ENCODE measurements at regions of chr2 and their contacts with region 1.

Region 1: DNA sequence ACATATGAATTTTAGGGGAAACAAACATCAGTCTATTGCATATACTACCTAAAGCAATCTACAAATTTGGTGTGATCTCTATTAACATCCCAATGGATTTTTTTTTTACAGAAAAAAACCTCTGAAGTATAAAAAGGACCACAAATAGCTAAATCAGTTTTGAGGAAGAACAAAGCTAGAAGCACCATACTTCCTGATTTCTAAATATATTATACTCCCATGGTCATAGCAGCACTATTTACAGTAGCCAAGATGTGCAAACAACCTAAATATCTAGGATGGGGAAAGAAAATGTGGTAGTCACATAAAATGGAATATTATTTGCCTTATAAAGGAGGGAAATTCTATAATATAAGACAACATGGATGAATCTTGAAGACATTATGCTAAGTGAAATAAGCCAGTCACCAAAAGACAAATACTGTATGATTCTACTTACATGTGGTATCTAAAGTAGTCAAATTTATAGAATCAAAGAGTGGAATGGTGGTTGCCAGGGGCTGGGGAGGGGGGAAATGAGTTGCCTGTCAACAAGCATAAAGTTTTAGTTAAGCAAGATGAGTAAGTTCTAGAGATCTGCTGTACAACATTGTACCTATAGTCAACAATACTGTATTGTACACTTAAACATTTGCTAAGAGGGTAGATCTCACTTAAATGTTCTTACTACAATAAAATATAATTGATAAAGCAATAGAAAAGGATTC is 17.6 kb upstream of the CASP8 start:
- DNase-seq: no peak
- H3K4me3 ChIP-seq: no peak overlapping the region
- H3K27ac ChIP-seq: no peak overlapping the region
- H3K4me1 ChIP-seq: no peaks in the 10 kb centered on the region
- H3K27me3 ChIP-seq: no peaks in the 10 kb centered on the region
- CTCF ChIP-seq: no peak

Region 2: DNA sequence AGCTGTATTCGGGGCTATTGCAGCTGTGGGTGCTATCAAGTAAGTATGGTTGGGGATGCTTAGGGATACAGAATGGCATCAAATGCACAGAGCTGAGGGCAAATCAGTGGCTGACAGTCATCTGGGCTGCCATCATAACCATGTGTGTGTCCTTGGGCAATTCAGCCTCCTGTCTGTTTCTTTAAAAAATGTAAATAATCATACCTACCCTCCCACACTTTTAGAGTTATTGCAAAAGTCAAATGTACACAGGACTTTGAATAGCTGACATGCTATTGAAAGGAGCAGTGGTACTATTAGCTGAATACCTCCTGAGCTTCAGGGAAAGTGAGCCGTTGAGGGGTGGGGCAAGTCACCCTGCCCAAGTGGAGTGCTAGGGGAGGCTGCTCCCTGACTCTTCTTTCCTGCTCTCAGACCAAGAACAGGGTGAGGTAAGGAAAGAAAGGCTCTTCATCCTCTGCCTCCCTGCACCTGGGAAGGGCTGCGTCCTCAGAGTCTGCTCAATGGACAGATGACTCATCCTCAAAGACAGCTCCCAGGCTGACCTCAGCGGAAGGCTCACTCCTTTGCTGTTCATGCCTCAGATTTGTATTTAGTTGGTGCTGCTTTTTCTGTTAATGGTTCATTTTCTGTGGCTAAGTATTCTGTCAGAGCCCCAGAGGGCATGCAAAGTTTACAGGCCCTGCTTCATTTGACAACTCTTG is 486.0 kb before region 1 on chr2:
- CTCF ChIA-PET with region 1: no interaction called
- dilution Hi-C with region 1: no loop called
- in situ Hi-C with region 1: no loop called
- intact Hi-C with region 1: no loop called
- DNase-seq: peak; percentile 93
- H3K4me3 ChIP-seq: no peak overlapping the region
- H3K27ac ChIP-seq: peak overlapping the region; percentile 58
- H3K4me1 ChIP-seq: peaks cover 53% of the 10 kb centered on the region
- H3K27me3 ChIP-seq: no peaks in the 10 kb centered on the region
- CTCF ChIP-seq: no peak

Region 3: DNA sequence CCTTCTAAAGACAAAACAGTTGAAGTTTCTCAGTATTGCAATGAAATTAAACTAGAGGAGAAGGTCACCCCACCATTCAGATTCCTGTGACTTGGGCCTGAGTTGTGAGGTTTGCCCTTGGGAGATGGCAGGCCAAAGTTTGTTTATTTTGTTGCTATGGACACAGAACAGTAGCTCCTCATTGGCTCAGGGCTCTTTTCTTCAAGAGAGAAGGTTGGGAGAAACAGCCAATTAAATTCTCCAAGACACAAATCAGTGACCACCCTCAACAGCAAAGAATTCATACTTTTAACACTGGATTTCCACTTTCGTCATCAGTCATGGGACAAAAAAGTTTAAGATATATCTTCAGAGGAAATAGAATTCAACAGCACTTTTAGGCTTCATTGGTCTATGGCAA is 114.5 kb after region 1 on chr2 and contains the start of gene FLACC1:
- CTCF ChIA-PET with region 1: no interaction called
- dilution Hi-C with region 1: no loop called
- in situ Hi-C with region 1: loop called (anchors 5 kb)
- intact Hi-C with region 1: no loop called
- DNase-seq: peak; percentile 49
- H3K4me3 ChIP-seq: no peak within 1 kb of the TSS
- H3K27ac ChIP-seq: peak within 1 kb of the TSS; percentile 12
- H3K4me1 ChIP-seq: peaks cover 10% of the 10 kb centered on the region
- H3K27me3 ChIP-seq: no peaks in the 10 kb centered on the region
- CTCF ChIP-seq: no peak
- total RNA-seq, gene FLACC1: 0.33 to 0.75 TPM

Measured in mammary epithelial cell (primary cell).